ENCODE measurements at regions of chr4 and their contacts with region 1.

Region 1: GRCh38 chr4:164012396-164013027 is 518.0 kb downstream of the TMA16 start:
- DNase-seq: peak; percentile 29
- ATAC-seq: peak; percentile 99
- H3K4me3 ChIP-seq: no peak overlapping the region
- H3K27ac ChIP-seq: no peak overlapping the region
- H3K4me1 ChIP-seq: no peaks in the 10 kb centered on the region
- H3K27me3 ChIP-seq: no peaks in the 10 kb centered on the region
- CTCF ChIP-seq: peak; percentile 69 to 82 (median 72)
- POLR2A ChIP-seq: no peak
- RAD21 ChIP-seq: peak; percentile 89

Region 2: GRCh38 chr4:163048447-163048846 is 964.1 kb before region 1 on chr4:
- CTCF ChIA-PET with region 1: no interaction called
- POLR2A ChIA-PET with region 1: no interaction called
- RAD21 ChIA-PET with region 1: no interaction called
- intact Hi-C with region 1: loop called (anchors 5 kb)
- DNase-seq: peak; percentile 34
- ATAC-seq: peak; percentile 77
- H3K4me3 ChIP-seq: no peak overlapping the region
- H3K27ac ChIP-seq: no peak overlapping the region
- H3K4me1 ChIP-seq: no peaks in the 10 kb centered on the region
- H3K27me3 ChIP-seq: no peaks in the 10 kb centered on the region
- CTCF ChIP-seq: peak; percentile 55 to 63 (median 61); a peak in 5 of 6 replicates
- POLR2A ChIP-seq: no peak
- RAD21 ChIP-seq: peak; percentile 58

Region 3: DNA sequence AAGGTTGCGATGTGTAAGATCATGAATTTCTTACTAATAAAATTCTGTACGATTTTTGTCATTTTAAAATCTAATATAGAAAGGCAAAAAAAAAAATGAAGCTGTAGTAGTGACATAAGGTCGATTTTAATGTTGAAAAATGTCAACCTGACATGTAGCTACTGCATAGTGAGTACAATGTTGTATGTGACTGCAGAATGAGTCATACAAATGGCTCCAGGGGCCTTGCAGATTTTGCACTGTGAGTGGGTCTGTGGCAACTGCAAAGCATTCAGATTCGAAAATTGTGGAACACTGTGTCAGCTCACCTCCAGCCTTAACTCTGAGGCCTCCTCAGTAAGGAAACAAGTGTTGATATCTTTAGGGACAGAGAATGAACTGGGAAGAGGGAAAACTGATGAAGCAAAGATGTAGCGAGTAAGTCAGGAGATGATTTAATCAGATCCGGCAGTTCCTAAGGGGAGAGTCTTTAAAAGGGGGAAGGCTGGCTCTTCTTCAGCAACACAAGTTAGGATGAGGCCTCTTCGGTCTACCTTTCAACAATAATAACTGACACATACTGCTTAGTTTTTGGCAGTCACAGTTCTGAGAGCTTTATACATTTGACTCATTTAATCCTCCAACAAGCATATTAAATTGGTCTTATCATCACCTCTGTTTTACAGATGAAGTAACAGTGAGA is 563.9 kb before region 1 on chr4:
- CTCF ChIA-PET with region 1: no interaction called
- POLR2A ChIA-PET with region 1: no interaction called
- RAD21 ChIA-PET with region 1: no interaction called
- intact Hi-C with region 1: no loop called
- DNase-seq: no peak
- ATAC-seq: peak; percentile 58
- H3K4me3 ChIP-seq: no peak overlapping the region
- H3K27ac ChIP-seq: no peak overlapping the region
- H3K4me1 ChIP-seq: peaks cover 0 to 5% of the 10 kb centered on the region in 2 experiments; a peak in 1 of 4 replicates
- H3K27me3 ChIP-seq: no peaks in the 10 kb centered on the region
- CTCF ChIP-seq: no peak
- POLR2A ChIP-seq: no peak
- RAD21 ChIP-seq: no peak

Region 4: DNA sequence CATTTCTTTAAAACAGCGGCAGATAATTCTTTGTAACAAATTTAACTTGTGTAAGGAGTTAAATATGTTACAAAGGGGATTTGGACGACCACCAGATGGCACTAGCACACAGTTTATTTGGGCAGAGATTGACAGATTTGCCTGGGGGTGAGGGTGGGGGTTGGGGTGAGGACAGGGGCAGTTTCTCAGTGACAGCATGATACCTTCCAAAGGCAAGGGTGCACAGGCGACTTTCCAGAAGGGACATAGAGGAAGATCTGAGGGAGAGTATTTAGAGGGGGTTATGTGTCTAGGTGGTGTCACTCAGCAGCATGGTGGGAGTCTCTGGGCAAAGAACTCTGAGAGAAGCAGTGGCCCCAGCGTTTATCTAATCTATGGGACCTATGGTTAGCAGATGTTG is 527.6 kb before region 1 on chr4:
- CTCF ChIA-PET with region 1: no interaction called
- POLR2A ChIA-PET with region 1: no interaction called
- RAD21 ChIA-PET with region 1: no interaction called
- intact Hi-C with region 1: loop called (anchors 2 kb)
- DNase-seq: peak; percentile 50
- ATAC-seq: peak; percentile 89
- H3K4me3 ChIP-seq: no peak overlapping the region
- H3K27ac ChIP-seq: no peak overlapping the region
- H3K4me1 ChIP-seq: no peaks in the 10 kb centered on the region
- H3K27me3 ChIP-seq: no peaks in the 10 kb centered on the region
- CTCF ChIP-seq: peak; percentile 50 to 78 (median 61); a peak in 5 of 6 replicates
- POLR2A ChIP-seq: no peak
- RAD21 ChIP-seq: peak; percentile 70

Region 5: GRCh38 chr4:163681208-163681821 is 331.2 kb before region 1 on chr4:
- CTCF ChIA-PET with region 1: no interaction called
- POLR2A ChIA-PET with region 1: no interaction called
- RAD21 ChIA-PET with region 1: no interaction called
- intact Hi-C with region 1: loop called (anchors 1 kb)
- DNase-seq: peak; percentile 38
- ATAC-seq: peak; percentile 85
- H3K4me3 ChIP-seq: no peak overlapping the region
- H3K27ac ChIP-seq: no peak overlapping the region
- H3K4me1 ChIP-seq: no peaks in the 10 kb centered on the region
- H3K27me3 ChIP-seq: no peaks in the 10 kb centered on the region
- CTCF ChIP-seq: peak; percentile 21 to 73 (median 62); a peak in 5 of 6 replicates
- POLR2A ChIP-seq: no peak
- RAD21 ChIP-seq: peak; percentile 44

Region 6: DNA sequence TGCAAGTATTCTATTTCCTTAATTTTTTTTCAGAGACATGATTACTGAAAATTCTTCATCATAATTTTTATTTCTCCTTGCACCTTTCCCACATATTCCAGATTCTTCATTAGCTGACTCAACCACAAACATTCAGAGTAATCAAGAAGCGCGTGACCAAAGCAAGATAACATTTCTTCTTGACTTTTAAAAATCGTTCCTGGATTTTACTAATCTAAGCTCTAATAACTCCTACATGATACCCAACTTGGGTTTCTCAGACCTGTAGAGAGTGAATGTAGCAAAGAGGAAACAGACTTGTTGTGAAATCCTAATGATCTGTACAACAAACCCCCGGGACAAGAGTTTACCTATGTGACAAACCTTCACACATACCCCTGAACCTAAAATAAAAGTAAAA is 97.0 kb after region 1 on chr4:
- CTCF ChIA-PET with region 1: no interaction called
- POLR2A ChIA-PET with region 1: no interaction called
- RAD21 ChIA-PET with region 1: no interaction called
- intact Hi-C with region 1: no loop called
- DNase-seq: no peak
- ATAC-seq: no peak
- H3K4me3 ChIP-seq: no peak overlapping the region
- H3K27ac ChIP-seq: no peak overlapping the region
- H3K4me1 ChIP-seq: no peaks in the 10 kb centered on the region
- H3K27me3 ChIP-seq: no peaks in the 10 kb centered on the region
- CTCF ChIP-seq: no peak
- POLR2A ChIP-seq: no peak
- RAD21 ChIP-seq: no peak

Region 7: GRCh38 chr4:164731827-164732474 is 719.4 kb after region 1 on chr4:
- CTCF ChIA-PET with region 1: no interaction called
- POLR2A ChIA-PET with region 1: no interaction called
- RAD21 ChIA-PET with region 1: no interaction called
- intact Hi-C with region 1: loop called (anchors 5 kb)
- DNase-seq: peak; percentile 43
- ATAC-seq: peak; percentile 81
- H3K4me3 ChIP-seq: no peak overlapping the region
- H3K27ac ChIP-seq: no peak overlapping the region
- H3K4me1 ChIP-seq: no peaks in the 10 kb centered on the region
- H3K27me3 ChIP-seq: no peaks in the 10 kb centered on the region
- CTCF ChIP-seq: peak; percentile 71 to 91 (median 82)
- POLR2A ChIP-seq: no peak
- RAD21 ChIP-seq: peak; percentile 87

Measured in HCT116 (cell line).